ENCODE measurements at regions of chr2 and their contacts with region 1.

Region 1: DNA sequence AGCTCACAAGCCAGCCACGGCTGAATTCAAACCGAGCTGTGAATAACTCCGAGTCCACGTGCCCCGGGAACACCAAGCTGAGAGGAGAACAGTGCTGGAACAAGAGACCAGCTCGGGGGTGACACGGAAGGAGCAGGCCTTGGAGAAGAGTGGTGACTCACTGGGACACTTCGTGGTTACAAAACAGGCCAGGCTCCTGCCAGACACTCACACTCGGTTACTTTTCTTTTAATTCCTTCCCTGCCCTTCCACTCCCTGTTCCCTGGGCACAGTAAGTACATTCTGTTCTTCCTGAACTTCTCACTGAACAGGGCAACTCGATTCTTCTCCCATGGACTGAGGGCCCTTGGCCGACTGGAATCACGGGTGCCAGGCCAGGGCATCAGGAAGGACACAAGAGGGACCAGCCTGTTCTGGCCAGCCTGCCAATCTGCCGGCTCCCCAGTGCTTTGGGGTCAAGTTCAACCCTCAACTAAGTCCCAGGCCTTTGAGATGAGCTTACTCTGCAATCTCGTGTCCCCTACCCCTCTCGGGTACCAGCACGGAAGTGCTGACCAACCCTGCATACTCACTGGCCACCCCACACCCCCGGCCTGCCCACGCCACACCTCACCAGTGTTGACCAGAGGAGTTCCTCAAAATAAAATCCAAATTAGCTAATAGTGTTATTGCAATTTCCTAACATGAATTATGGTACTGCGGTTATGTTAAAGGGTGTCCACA is 87.5 kb downstream of the TFCP2L1 start:
- DNase-seq: peak; percentile 98
- H3K4me3 Mint-ChIP-seq: peak overlapping the region; percentile 47
- H3K27ac Mint-ChIP-seq: peak overlapping the region; percentile 100
- H3K4me1 Mint-ChIP-seq: peaks cover 64% of the 10 kb centered on the region
- H3K27me3 Mint-ChIP-seq: no peaks in the 10 kb centered on the region
- CTCF ChIP-seq: no peak

Region 2: DNA sequence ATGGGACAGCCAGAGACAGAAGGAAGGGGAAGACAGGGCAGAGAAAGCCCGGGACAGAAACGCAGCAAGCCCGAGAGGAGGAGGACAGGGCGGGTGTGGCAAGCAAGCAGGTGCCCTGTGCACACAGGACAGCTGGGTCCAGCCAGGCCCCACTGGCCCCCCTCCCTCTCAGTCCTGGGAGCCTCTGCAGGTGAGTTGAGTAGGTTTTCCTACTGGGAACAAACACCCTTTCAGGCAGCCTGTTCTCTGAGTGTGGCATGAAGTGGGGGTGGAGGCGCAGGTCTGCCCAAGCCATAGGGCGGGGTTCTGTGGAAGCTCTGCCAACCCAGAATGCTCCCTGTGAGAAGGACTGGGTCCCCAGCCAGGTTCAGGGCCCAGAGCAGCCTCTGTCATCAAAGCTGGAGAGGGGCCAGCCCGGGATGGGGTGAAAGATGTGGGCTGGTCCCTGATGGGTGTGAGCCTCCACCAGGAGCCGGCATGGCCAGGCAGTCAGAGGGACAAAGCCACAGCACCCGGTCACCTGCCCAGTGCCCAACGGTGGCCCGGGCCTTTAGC is 42.0 kb before region 1 on chr2:
- CTCF ChIA-PET with region 1: interaction called, 7 read pairs
- POLR2A ChIA-PET with region 1: interaction called, 16 read pairs
- intact Hi-C with region 1: no loop called
- DNase-seq: peak; percentile 47
- H3K4me3 Mint-ChIP-seq: no peak overlapping the region
- H3K27ac Mint-ChIP-seq: peak overlapping the region; percentile 3
- H3K4me1 Mint-ChIP-seq: peaks cover 15% of the 10 kb centered on the region
- H3K27me3 Mint-ChIP-seq: no peaks in the 10 kb centered on the region
- CTCF ChIP-seq: no peak

Region 3: DNA sequence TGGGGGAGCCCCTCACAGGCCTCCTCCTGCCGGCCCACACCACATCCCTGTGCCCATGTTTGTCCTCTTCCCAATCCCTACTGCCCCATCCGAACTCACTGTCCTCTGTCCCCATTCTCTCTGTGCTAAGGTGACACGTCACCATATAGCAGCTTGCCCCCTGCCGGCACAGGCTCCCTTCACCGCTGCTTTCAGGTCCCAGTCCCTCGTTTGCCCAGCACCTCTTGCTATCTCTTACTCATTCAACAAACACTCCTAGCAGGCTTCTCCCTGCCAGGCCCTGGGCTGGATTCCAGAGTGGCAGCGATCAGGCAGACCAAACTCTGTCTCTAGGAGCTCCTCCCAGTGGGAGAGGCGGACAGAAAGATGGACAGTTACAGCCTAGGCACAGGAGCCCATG is 13.2 kb after region 1 on chr2:
- CTCF ChIA-PET with region 1: interaction called, 10 read pairs
- POLR2A ChIA-PET with region 1: interaction called, 69 read pairs
- intact Hi-C with region 1: no loop called
- DNase-seq: peak; percentile 87
- H3K4me3 Mint-ChIP-seq: peak overlapping the region; percentile 6
- H3K27ac Mint-ChIP-seq: peak overlapping the region; percentile 74
- H3K4me1 Mint-ChIP-seq: peaks cover 22% of the 10 kb centered on the region
- H3K27me3 Mint-ChIP-seq: no peaks in the 10 kb centered on the region
- CTCF ChIP-seq: no peak

Region 4: GRCh38 chr2:121284463-121285449 is 87.2 kb after region 1 on chr2 and contains the start of gene TFCP2L1:
- CTCF ChIA-PET with region 1: no interaction called
- POLR2A ChIA-PET with region 1: interaction called, 27 read pairs
- intact Hi-C with region 1: no loop called
- DNase-seq: peak; percentile 61
- H3K4me3 Mint-ChIP-seq: peak within 1 kb of the TSS; percentile 97
- H3K27ac Mint-ChIP-seq: peak within 1 kb of the TSS; percentile 98
- H3K4me1 Mint-ChIP-seq: peaks cover 22% of the 10 kb centered on the region
- H3K27me3 Mint-ChIP-seq: no peaks in the 10 kb centered on the region
- CTCF ChIP-seq: no peak
- total RNA-seq, gene TFCP2L1: 22.6 and 24.3 TPM in 2 replicates

Region 5: GRCh38 chr2:121356058-121356640 is 158.6 kb after region 1 on chr2:
- CTCF ChIA-PET with region 1: interaction called, 6 read pairs
- POLR2A ChIA-PET with region 1: interaction called, 14 read pairs
- intact Hi-C with region 1: no loop called
- DNase-seq: peak; percentile 81
- H3K4me3 Mint-ChIP-seq: no peak overlapping the region
- H3K27ac Mint-ChIP-seq: peak overlapping the region; percentile 39
- H3K4me1 Mint-ChIP-seq: peaks cover 23% of the 10 kb centered on the region
- H3K27me3 Mint-ChIP-seq: no peaks in the 10 kb centered on the region
- CTCF ChIP-seq: peak; percentile 62

Measured in MCF 10A (cell line).